Posterior cingulate gyrus (tissue), 11 donors: ENCODE measurements at regions of chr11 and their contacts with region 1.

Region 1: DNA sequence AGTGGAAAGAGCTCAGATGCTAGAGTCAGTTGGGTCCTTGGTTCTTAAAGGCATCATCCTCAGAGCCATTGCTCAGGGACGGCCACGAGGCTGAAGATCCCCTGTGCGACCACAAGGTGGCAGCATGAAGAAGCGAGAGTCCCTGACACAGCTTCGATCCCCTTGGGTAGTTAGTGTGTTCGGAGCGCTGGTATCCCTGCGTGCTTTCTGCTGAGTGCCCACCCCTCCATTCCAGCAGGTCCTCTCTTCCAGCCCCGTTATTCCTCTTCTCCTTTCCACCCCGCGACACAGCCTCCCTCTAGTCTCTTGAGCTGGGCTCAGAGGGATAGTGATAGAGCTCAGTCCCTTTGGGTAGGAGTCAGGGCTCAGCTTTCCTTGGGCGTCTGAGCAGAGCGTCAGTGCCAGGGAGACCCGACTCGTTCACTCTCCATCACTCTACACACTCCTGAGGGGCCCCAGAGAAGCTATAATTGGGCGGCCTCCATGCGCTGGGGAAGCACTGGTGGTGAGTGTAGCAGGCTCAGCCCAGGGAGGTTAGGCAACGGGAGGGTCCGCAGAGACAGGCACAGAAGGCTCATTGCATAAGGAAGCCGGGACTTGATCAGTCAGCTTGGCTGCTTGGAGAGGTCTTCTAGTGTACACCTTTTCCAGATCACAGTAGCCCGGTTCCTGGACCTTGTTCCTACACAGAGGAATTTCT is at the start of gene OR51D1:
- DNase-seq: peak; percentile 45 to 95 (median 74)

Region 2: GRCh38 chr11:4607781-4608666 is 29.1 kb before region 1 on chr11 and contains the start of gene TRIM68:
- intact Hi-C with region 1: loop called (anchors 2 kb)
- DNase-seq: peak; percentile 94 to 100 (median 98)

Region 3: DNA sequence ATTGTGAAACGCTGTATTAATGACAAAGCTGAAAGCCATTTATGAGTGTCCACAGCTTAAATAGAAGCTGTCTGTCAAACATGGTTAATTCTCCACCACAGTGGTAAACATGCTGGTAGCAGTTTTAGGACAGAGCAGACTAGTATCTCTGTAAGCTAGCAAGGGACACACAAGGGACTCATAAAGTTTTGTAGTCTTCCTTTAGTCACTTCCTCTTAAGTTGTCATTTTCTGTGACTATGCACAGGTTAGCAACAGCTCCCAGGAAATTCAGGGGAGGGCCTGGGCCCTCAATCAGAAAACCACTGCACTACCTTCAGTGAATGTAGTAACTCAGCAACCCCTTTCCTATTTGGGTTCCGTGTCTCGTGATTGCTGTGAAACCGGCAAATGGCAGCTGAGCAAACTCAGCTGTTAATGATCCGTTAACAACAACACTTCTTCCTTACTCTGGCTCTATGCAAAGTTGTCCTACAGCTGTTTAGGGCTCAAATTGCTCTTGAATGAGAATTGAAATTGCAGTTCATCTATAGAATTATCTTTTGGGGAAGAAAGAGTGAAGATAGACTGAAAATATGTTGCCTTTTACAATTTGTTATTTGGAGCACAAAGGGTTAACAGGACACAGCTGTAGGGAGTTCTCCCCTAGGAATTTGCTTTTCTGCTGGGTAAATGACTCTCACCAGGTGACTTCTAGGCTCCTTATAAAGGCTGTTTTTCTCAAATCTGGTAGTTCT is 67.1 kb after region 1 on chr11 and contains the start of gene MMP26:
- intact Hi-C with region 1: no loop called
- DNase-seq: no peak

Region 4: DNA sequence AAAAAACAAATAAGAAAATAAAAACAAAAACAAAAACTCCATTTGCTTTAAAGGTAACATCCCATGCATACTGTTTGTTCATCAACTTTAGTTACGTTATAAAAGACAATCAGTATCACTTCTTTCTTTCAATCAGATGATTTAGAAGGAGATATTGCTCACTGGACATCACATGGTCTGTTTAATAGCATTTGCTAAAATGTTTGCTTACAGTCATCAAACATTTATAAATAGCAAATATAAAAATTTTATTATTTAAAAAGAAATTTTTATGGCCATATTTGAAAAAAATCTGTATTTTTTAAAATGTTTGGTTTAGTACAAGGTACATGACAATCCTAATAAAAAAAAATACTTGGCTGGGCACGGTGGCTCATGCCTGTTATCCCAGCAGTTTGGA is 90.1 kb after region 1 on chr11:
- intact Hi-C with region 1: no loop called
- DNase-seq: no peak

Region 5: DNA sequence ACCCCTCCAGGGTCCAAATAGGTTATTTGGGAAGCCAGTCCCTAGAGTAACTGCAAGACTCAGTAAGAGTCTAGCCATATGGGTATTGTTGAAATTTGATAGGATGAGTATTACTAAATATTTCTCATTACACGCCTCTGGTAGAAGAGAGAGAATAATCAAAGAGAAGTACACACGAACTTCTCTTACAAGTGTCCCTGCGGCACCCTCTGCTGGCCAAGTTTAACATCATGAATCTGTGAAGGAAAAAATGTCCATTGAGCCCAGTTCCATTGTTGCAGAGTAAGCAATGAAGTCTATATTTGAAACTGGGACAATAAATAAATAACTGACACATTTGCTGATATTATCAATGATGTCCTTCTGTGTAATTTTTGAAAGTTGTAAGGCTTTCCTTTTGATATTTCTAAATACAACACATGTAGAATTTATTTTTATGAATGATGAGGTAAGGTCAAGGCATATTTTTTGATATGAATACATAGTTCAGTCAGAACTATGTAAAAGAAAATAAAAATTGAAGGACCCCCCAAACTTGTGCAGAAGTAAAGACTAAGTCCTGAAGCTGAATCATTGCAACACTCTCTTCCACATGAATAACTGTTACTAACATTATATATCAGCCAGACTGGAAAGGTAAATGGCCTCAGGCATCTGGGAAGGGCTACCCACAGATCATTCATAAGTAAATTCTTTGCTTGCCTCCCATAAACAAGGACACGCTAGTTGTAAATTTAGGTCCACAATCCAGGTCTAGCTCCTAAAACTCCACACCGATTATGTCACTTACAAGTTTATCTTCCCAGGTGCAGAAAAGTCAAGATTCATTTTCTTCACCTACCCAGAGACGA is 367.5 kb after region 1 on chr11:
- intact Hi-C with region 1: loop called (anchors 5 kb)
- DNase-seq: peak in 9 of 10 donors; percentile 14 to 87 (median 58)